Posterior cingulate gyrus (tissue), 11 donors: ENCODE measurements at regions of chr19 and their contacts with region 1.

Region 1: DNA sequence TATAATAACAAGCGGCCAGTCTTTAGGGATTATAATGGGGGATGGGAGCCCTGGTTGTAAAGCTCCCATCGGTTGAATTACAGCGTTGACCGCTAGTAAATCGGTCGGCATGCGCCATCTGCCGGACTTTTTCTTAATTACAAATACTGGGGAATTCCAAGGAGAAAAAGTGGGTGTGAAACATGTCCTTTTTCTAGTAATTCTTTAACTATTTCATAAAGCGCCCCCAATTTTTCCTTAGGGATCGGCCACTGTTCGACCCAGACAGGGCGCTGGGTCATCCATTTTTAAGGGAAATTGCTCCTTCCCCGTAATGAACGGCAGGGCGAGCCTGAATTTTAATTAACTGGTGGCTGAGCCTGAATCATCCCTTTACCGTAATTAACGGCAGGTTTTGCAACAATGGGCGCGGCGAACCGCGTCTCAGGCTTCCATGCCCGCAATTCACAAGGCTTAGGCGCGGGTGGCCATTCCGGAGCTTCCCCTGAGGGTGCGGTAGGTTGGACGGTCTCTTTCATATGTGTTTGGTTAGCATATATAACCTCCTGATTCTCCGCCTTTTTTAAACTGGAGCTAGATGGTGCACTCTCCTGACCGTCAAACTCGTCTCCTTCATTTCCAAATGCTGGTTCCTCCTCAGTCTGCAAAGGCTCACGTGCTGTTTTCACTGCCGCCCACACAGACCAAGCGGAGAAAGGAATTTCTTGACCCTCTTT is 30.2 kb upstream of the EVI5L start:
- DNase-seq: peak in 8 of 10 donors; percentile 40 to 94 (median 68)

Region 2: GRCh38 chr19:7349961-7350711 is 449.7 kb before region 1 on chr19:
- intact Hi-C with region 1: loop called (anchors 10 kb)
- DNase-seq: no peak

Region 3: DNA sequence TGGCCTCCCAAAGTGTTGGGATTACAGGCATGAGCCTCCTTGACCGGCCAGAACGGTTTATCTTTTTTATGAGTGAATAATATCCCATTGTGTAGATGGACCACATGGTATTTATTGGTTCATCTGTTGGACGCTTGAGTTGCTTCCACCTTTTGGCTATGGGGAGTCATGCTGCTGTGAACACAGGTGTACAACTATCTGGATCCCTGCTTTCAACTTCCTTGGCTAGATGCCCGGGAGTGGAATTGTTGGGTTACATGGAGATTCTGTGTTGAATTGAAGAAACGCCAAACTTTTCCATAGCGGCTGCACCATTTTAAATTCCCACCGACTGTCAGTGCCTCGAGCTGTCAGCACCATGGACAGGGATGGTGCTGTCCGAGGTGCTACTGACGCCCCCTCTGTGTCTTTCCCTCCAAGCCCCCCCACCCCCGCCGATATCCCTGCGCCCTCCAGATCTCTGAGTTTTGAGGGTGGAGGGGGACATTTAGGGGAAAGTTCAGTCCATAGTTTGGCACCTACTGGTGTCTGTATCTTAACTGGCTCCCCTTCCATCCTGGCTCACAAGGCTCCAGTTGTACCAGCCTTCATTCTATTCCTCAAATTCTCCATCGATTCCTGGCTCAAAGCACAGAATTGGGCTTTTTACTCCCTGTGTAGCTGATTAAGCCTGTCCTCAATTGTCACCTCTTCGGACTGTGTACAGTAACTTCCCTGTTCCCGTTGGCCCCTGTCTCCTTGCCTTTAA is 237.0 kb before region 1 on chr19:
- intact Hi-C with region 1: loop called (anchors 5 kb)
- DNase-seq: no peak

Region 4: GRCh38 chr19:7652061-7652641 is 147.6 kb before region 1 on chr19:
- intact Hi-C with region 1: loop called (anchors 1 kb)
- DNase-seq: peak; percentile 49 to 97 (median 82)

Region 5: GRCh38 chr19:7680606-7681339 is 119.0 kb before region 1 on chr19 and contains the start of gene TRAPPC5:
- intact Hi-C with region 1: loop called (anchors 1 kb)
- DNase-seq: peak; percentile 75 to 98 (median 82)